AG04450 (cell line): ENCODE measurements at regions of chr20 and their contacts with region 1.

Region 1: GRCh38 chr20:36773597-36774390 is at the start of gene DSN1:
- DNase-seq: peak; percentile 95
- H3K4me3 ChIP-seq: peak within 1 kb of the TSS; percentile 91
- H3K27ac ChIP-seq: peak within 1 kb of the TSS; percentile 98
- H3K27me3 ChIP-seq: no peaks in the 10 kb centered on the region
- CTCF ChIP-seq: no peak; the same call in 1 of the 2 replicates
- polyA plus RNA-seq, gene DSN1: 6.0 and 8.7 TPM in 2 replicates

Region 2: DNA sequence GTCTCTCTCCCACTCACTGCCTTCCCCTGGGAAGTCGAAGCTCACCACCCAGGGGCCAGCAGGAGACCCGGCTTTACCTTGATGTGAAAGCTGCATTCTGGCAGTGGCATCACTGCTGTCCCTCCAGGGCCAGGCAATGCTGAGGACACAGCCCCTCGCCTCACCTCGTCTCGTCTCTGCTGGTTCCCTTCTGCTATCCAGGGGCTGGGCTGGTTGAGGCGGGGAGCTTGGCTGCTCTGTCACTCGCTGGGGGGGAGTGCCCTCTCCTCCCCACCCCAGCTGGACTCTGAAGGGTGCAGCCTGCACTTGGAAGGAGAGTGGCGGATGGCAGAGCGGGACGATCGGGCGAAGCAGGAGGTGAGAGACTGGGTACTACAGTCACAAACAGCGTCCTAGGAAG is 12.5 kb after region 1 on chr20:
- CTCF ChIA-PET with region 1: interaction called, 15 read pairs
- POLR2A ChIA-PET with region 1: interaction called, 7 read pairs
- DNase-seq: no peak
- H3K4me3 ChIP-seq: no peak overlapping the region
- H3K27ac ChIP-seq: no peak overlapping the region
- H3K27me3 ChIP-seq: no peaks in the 10 kb centered on the region
- CTCF ChIP-seq: no peak

Region 3: GRCh38 chr20:36847009-36847709 is 73.4 kb after region 1 on chr20:
- CTCF ChIA-PET with region 1: interaction called, 6 read pairs
- POLR2A ChIA-PET with region 1: interaction called, 12 read pairs
- DNase-seq: peak; percentile 52
- H3K4me3 ChIP-seq: no peak overlapping the region
- H3K27ac ChIP-seq: peak overlapping the region; percentile 98
- H3K27me3 ChIP-seq: no peaks in the 10 kb centered on the region
- CTCF ChIP-seq: no peak